Endothelial cell of umbilical vein (primary cell): ENCODE measurements at regions of chr7 and their contacts with region 1.

Region 1: GRCh38 chr7:37495574-37496184 is 47.0 kb upstream of the ELMO1 start:
- DNase-seq: peak; percentile 52
- H3K4me3 ChIP-seq: no peak overlapping the region
- H3K27ac ChIP-seq: no peak overlapping the region
- H3K4me1 ChIP-seq: no peaks in the 10 kb centered on the region
- H3K27me3 ChIP-seq: no peaks in the 10 kb centered on the region
- CTCF ChIP-seq: peak; percentile 42 to 57
- POLR2A ChIP-seq: no peak

Region 2: DNA sequence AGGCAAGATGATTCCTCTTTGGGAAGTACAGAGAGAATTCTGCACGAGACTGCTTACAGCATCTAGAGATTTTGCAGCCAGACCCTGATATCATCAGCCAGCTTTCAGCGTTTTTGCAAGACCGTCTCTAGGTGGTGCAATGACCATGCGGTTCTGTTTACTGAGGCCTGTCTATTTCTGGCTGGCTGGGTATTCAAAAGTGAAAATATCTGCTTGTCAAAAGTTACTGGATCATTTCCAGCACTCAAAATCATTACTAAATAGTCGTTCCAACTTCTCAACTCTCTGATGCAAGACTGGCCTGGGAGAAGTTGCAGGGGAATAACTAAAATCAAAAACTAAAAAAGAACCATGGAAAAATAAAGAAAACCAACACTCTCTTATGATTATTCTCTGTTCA is 287.2 kb before region 1 on chr7:
- CTCF ChIA-PET with region 1: interaction called, 21 read pairs
- POLR2A ChIA-PET with region 1: no interaction called
- dilution Hi-C with region 1: no loop called
- intact Hi-C with region 1: no loop called
- DNase-seq: peak; percentile 73
- H3K4me3 ChIP-seq: no peak overlapping the region
- H3K27ac ChIP-seq: no peak overlapping the region
- H3K4me1 ChIP-seq: no peaks in the 10 kb centered on the region
- H3K27me3 ChIP-seq: no peaks in the 10 kb centered on the region
- CTCF ChIP-seq: peak; percentile 31 to 61
- POLR2A ChIP-seq: no peak

Region 3: GRCh38 chr7:37440738-37441385 is 54.8 kb before region 1 on chr7:
- CTCF ChIA-PET with region 1: interaction called, 28 read pairs
- POLR2A ChIA-PET with region 1: no interaction called
- dilution Hi-C with region 1: no loop called
- intact Hi-C with region 1: no loop called
- DNase-seq: peak; percentile 91
- H3K4me3 ChIP-seq: peak overlapping the region in 1 of 3 experiments; percentile 45
- H3K27ac ChIP-seq: peak overlapping the region; percentile 91
- H3K4me1 ChIP-seq: peaks cover 22% of the 10 kb centered on the region
- H3K27me3 ChIP-seq: no peaks in the 10 kb centered on the region
- CTCF ChIP-seq: no peak
- POLR2A ChIP-seq: no peak

Region 4: DNA sequence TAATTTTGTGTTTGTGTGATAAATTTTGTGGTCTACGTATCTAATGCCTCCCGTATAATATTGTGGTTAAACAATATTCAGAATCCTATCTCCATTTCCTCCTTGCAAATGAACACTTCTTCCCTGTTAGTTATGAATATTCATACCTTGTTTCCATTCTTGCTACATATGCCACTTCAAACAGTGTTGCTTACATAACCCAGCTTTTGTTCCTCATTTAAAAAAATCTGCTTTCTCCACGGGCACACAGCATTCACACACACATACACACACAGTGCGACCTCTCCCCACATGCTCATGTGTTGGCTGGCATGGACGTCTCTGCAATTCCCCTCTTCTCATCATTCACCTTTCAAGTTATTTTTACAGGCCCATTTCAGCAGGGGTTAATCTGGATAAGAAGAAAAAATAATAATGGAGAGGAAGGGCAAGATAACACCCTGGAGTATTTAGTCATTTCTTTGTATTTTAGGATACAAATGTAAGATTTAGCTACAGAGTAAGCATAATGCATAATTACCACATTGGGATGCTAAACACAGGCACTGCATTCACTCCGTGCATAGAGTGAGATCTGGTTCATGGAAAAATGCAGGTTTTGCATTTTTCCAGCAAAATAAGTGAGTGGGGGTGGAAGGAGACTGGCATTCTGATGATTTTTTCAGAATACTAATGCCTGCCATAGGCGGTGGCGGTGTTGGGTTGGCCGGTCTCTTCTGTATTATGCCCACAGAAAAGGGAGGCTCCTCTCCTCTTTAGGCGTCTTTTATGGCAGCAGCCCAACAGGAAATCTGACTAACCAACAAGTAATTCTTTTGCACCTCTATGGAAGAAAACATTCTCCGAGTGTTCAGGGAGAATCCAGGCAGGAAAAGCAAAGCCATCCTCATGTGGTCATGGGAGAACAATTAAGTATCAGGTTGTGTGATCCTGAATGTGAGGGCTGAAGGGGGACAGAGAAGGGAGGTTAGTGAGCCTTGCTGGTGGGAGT is 15.3 kb before region 1 on chr7:
- CTCF ChIA-PET with region 1: interaction called, 15 read pairs
- POLR2A ChIA-PET with region 1: no interaction called
- dilution Hi-C with region 1: no loop called
- intact Hi-C with region 1: no loop called
- DNase-seq: peak; percentile 86
- H3K4me3 ChIP-seq: no peak overlapping the region
- H3K27ac ChIP-seq: peak overlapping the region; percentile 63
- H3K4me1 ChIP-seq: peaks cover 23% of the 10 kb centered on the region
- H3K27me3 ChIP-seq: no peaks in the 10 kb centered on the region
- CTCF ChIP-seq: no peak
- POLR2A ChIP-seq: peak; percentile 40

Region 5: GRCh38 chr7:37510043-37510634 is 14.5 kb after region 1 on chr7:
- CTCF ChIA-PET with region 1: interaction called, 80 read pairs
- POLR2A ChIA-PET with region 1: no interaction called
- dilution Hi-C with region 1: no loop called
- intact Hi-C with region 1: no loop called
- DNase-seq: peak; percentile 46
- H3K4me3 ChIP-seq: no peak overlapping the region
- H3K27ac ChIP-seq: no peak overlapping the region
- H3K4me1 ChIP-seq: peaks cover 3% of the 10 kb centered on the region
- H3K27me3 ChIP-seq: peaks cover 11 to 14% of the 10 kb centered on the region in 2 experiments
- CTCF ChIP-seq: peak; percentile 72 to 76
- POLR2A ChIP-seq: no peak